Sigmoid colon (tissue), 7 donors: ENCODE measurements at regions of chr1 and their contacts with region 1.

Region 1: GRCh38 chr1:211133836-211134669 is at the start of gene KCNH1:
- DNase-seq: peak; percentile 90
- H3K4me3 ChIP-seq: peak within 1 kb of the TSS; percentile 21 to 56 (median 52)
- H3K27ac ChIP-seq: peak within 1 kb of the TSS in 3 of 4 donors; percentile 4 to 49 (median 49)
- H3K4me1 ChIP-seq: peaks cover 0 to 19% (median 14%) of the 10 kb centered on the region in 4 donors
- H3K27me3 ChIP-seq: peaks cover 0 to 27% (median 0%) of the 10 kb centered on the region in 3 donors
- CTCF ChIP-seq: peak; percentile 42 to 93 (median 79)
- EP300 ChIP-seq: no peak
- POLR2A ChIP-seq: no peak
- total RNA-seq, gene KCNH1: 0.54 to 3.1 (median 1.5) TPM

Region 2: DNA sequence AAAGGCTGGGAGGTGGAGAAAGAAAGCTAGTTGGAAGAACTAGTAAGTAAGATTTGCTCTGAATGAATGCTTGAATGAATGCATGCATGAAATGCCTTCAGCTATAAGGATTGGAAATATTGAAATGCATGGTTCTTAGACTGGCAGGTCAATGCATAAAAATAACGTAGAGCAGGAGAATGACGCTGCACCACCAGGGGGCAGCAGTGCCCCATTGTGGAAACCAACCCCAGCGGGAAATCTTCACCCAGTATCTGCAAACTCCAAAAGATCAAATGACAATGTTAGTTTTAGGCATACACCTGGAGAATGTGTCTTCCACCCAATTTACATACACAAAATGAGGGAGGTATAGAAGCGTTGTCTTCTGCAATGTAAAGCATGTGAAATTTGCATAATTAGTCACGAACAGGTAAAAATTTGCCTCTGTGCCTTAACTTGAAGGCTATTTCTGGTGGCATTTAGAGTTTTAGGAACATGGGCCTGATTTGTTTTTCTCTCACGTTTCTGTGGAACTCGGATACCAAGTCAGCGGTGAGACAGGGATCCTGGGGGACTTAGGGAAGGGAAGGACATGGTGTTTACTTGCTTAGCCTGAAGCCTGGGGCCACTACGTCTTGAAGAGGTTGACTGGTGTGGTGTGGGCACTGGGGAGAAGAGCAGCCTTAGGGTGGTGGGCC is 726.7 kb before region 1 on chr1:
- intact Hi-C with region 1: loop called (anchors 1 kb)
- DNase-seq: peak; percentile 74
- H3K4me3 ChIP-seq: no peak overlapping the region
- H3K27ac ChIP-seq: no peak overlapping the region
- H3K4me1 ChIP-seq: no peaks in the 10 kb centered on the region
- H3K27me3 ChIP-seq: no peaks in the 10 kb centered on the region
- CTCF ChIP-seq: peak; percentile 62 to 91 (median 81)
- EP300 ChIP-seq: no peak
- POLR2A ChIP-seq: no peak

Region 3: GRCh38 chr1:210448297-210448892 is 685.7 kb before region 1 on chr1:
- intact Hi-C with region 1: loop called (anchors 2 kb)
- DNase-seq: no peak
- H3K4me3 ChIP-seq: no peak overlapping the region
- H3K27ac ChIP-seq: no peak overlapping the region
- H3K4me1 ChIP-seq: no peaks in the 10 kb centered on the region
- H3K27me3 ChIP-seq: no peaks in the 10 kb centered on the region
- CTCF ChIP-seq: peak; percentile 25 to 63 (median 32)
- EP300 ChIP-seq: no peak
- POLR2A ChIP-seq: no peak

Region 4: DNA sequence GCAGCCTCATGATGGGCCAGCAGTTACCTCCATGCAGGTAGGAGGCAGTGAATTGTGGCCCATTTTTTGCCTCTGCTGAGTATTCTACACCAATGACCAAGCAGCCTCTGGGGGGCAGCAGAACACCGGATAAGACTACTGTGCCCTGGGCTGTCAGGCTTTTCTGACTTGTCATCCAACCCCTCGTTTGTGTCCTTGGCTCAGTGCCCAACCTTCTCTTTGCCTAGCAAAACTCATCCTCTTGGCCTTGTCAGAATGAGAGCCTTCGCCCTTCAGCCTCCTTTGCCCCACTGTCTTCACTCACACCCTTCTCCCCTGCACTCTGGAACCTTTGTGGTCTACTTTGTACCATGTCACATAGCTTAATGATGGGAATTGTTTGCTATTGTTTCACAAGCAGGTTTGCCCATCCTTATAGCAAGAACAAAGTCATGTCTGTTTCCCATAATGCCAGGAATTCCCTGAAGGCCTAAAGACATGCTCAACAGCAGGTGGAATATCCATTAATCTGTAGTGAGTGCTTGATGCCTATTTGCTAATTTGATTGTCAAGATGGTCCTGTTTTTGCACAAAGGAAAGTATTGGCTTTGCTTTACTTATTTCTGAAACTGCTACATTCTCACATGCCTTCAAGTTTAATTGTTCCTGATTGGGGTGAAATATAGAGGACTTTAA is 549.5 kb before region 1 on chr1:
- intact Hi-C with region 1: loop called (anchors 1 kb)
- DNase-seq: peak; percentile 80
- H3K4me3 ChIP-seq: no peak overlapping the region
- H3K27ac ChIP-seq: no peak overlapping the region
- H3K4me1 ChIP-seq: peaks cover 0 to 18% (median 9%) of the 10 kb centered on the region in 4 donors
- H3K27me3 ChIP-seq: no peaks in the 10 kb centered on the region
- CTCF ChIP-seq: peak in 3 of 4 experiments; percentile 19 to 52 (median 41)
- EP300 ChIP-seq: no peak
- POLR2A ChIP-seq: no peak

Region 5: GRCh38 chr1:211258756-211259637 is 124.9 kb after region 1 on chr1 and contains the start of gene RCOR3:
- intact Hi-C with region 1: loop called (anchors 2 kb)
- DNase-seq: peak; percentile 97
- H3K4me3 ChIP-seq: peak within 1 kb of the TSS; percentile 75 to 99 (median 94)
- H3K27ac ChIP-seq: peak within 1 kb of the TSS; percentile 99 to 100 (median 100)
- H3K4me1 ChIP-seq: peaks cover 0 to 40% (median 32%) of the 10 kb centered on the region in 4 donors
- H3K27me3 ChIP-seq: no peaks in the 10 kb centered on the region
- CTCF ChIP-seq: peak in 1 of 4 experiments; percentile 47
- EP300 ChIP-seq: peak in 1 of 4 donors; percentile 12
- POLR2A ChIP-seq: peak; percentile 77 to 85
- total RNA-seq, gene RCOR3: 40.7 to 60.3 (median 55.7) TPM